Aorta (tissue), 5 donors: ENCODE measurements at regions of chr14 and their contacts with region 1.

Region 1: DNA sequence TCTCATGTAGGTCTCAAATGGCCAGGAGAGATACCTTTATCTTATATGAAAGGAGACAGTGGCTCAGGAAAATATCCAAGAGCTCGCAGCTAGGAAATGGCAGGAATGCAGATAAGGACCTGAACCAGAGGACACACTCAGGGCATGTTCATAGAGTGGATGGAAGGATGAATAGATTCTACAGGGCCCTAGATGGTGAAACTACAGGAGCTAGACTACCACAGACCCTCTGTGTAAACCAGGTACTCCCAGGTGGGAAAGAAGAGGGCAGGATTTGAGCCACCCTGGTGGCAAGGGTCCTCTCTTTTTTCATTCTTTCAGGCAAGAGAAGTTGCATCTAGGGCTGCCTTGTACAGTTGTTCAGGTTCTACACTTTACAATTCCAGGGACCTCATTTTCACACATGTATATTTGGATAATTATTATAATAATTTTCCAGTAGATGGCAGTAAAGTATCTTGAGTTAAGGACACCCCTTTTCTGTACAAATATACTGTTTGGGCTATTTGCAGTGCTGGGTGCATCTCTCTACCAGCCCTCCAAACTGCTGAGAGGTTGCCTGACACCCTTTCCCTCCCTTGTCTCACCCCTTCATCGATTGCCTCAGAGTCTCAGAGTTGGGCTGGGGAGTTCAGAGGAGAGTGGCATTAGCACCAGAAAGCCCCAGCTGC is 10.5 kb upstream of the ZDHHC22 start:
- DNase-seq: no peak
- ATAC-seq: no peak
- H3K4me3 ChIP-seq: no peak overlapping the region
- H3K27ac ChIP-seq: no peak overlapping the region
- H3K4me1 ChIP-seq: no peaks in the 10 kb centered on the region
- H3K27me3 ChIP-seq: no peaks in the 10 kb centered on the region

Region 2: DNA sequence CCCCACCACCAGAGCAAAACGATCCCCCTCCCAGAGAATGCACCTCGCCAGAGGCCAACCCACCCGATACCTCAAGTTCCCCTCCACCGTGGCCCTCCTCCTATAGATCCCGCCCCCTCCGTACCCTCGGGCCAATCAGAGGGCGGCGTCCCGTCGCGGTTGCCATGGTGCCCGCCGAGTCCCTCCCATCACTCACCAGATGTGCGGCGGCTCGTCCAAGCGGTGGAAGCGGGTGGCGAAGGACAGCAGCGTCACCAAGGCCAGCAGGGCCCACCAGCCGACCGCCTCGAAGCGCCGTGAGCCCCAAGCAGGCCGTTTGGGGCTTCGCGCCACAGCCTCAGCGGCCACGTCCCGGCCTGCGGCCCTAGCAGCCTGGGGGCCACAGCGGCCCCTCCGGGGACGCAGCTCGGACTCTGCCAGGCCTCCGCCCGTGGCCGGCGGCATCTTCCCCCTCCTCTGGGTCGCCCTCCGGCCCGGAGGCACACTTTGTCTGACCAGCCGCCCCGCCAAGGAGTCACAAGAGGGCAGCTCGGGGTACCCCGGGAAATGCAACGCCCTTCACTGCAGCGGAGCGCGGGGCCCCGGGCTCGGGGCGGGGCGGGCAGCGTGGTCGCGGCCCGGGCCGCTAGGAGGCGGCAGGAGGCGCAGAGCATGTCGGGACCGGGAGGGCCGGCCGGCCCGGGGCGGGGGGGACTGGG is 168.3 kb after region 1 on chr14 and contains the start of gene POMT2:
- intact Hi-C with region 1: loop called (anchors 5 kb)
- DNase-seq: peak; percentile 96 to 97
- ATAC-seq: peak; percentile 90
- H3K4me3 ChIP-seq: peak within 1 kb of the TSS; percentile 87 to 93
- H3K27ac ChIP-seq: peak within 1 kb of the TSS; percentile 49 to 94
- H3K4me1 ChIP-seq: no peaks in the 10 kb centered on the region
- H3K27me3 ChIP-seq: no peaks in the 10 kb centered on the region
- total RNA-seq, gene POMT2: 15.6 to 23.4 TPM

Region 3: DNA sequence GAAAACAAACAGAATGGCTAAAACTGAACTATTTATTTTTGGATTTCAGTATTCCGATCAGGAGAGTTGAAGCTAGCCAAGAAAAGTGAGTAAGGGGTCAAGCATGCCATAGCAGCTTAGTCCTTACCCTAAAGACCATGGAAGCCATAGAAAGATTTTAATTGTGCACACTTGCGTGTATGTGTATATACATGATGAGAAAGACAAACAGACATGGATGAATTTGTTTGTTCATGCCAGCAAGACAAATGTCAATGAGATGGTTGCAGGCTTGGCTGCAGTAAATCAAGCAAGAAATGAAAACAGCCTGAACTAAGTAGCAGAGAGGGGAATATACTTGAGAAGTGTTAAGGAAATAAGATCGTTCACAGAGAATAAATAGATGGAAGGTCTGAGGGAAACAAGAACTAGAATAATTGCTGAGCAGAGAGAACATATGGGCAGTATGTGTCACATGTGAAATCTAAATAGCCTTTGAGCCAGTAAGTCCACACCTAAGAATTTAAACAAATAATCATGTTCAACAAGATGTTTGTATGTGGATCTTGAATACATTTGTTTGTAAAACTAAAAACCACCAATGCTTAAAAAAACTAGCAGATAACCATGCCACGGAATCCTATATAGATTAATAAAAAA is 594.1 kb after region 1 on chr14:
- intact Hi-C with region 1: loop called in 1 of 2 experiments (anchors 10 kb)
- DNase-seq: no peak
- ATAC-seq: no peak
- H3K4me3 ChIP-seq: no peak overlapping the region
- H3K27ac ChIP-seq: no peak overlapping the region
- H3K4me1 ChIP-seq: no peaks in the 10 kb centered on the region
- H3K27me3 ChIP-seq: no peaks in the 10 kb centered on the region